Activated naive CD4-positive, alpha-beta T cell treated with anti-CD3 and anti-CD28 coated beads for 36 hours (primary cell): ENCODE measurements at regions of chr6 and their contacts with region 1.

Region 1: GRCh38 chr6:112117554-112117953 is 30.2 kb downstream of the FAM229B start:
- DNase-seq: peak; percentile 27
- H3K4me3 Mint-ChIP-seq: no peak overlapping the region
- H3K27ac Mint-ChIP-seq: no peak overlapping the region
- H3K4me1 Mint-ChIP-seq: peaks cover 12% of the 10 kb centered on the region
- H3K27me3 Mint-ChIP-seq: no peaks in the 10 kb centered on the region

Region 2: GRCh38 chr6:112153926-112154607 is 36.5 kb after region 1 on chr6:
- CTCF ChIA-PET with region 1: no interaction called
- intact Hi-C with region 1: loop called (anchors 2 kb)
- DNase-seq: no peak
- H3K4me3 Mint-ChIP-seq: no peak overlapping the region
- H3K27ac Mint-ChIP-seq: peak overlapping the region; percentile 48
- H3K4me1 Mint-ChIP-seq: peaks cover 24% of the 10 kb centered on the region
- H3K27me3 Mint-ChIP-seq: no peaks in the 10 kb centered on the region